ENCODE measurements at regions of chrX and their contacts with region 1.

Region 1: DNA sequence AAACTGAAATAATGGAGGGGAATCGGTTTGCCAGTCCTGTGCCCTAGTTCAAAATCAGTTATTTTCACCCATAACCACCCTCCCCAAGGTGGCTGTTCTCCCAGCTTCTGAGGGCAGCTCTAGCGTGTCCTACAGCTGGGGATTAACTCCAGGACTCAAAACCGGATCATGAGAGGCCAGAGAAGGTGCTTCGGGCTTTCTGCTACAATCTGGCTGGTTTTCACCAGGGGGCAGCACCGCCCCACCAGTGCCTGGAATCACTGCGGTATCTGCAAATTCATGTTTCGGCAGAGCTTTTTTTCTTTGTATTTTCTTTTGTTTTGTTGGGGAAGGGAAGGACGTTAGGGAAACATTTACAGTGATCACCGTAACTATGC is 28.4 kb downstream of the PDHA1 start:
- DNase-seq: peak; percentile 52 to 70
- ATAC-seq: peak; percentile 56 to 81 (median 69)
- H3K4me3 ChIP-seq: peak overlapping the region; percentile 54
- H3K27ac ChIP-seq: no peak overlapping the region
- H3K4me1 ChIP-seq: no peaks in the 10 kb centered on the region
- H3K27me3 ChIP-seq: peaks cover 0 to 9% (median 0%) of the 10 kb centered on the region in 3 donors
- CTCF ChIP-seq: peak; percentile 56

Region 2: DNA sequence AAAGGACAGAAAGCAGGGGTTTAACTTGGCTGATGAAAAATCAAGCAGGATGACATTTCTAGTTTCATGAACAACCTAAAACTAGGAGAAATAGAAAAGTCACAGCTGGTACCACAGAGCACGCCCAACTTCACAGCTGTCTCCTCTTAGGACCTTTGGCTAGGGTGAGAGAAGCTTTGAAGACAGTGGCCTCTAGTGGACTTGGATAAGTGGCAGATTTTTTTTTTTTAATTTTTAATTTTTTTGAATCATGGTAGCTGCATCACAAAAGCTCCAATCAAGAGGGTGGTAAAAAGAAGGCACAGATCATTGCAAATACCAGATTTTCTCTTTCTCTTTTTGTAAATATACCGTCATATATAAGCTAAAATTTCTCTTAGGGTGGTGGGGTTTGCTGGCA is 163.3 kb after region 1 on chrX:
- intact Hi-C with region 1: loop called in 1 of 2 experiments (anchors 10 kb)
- DNase-seq: no peak
- ATAC-seq: no peak
- H3K4me3 ChIP-seq: no peak overlapping the region
- H3K27ac ChIP-seq: no peak overlapping the region
- H3K4me1 ChIP-seq: no peaks in the 10 kb centered on the region
- H3K27me3 ChIP-seq: peaks cover 0 to 6% (median 0%) of the 10 kb centered on the region in 3 donors
- CTCF ChIP-seq: no peak

Measured in psoas muscle (tissue), 8 donors.